Activated naive CD4-positive, alpha-beta T cell treated with anti-CD3 and anti-CD28 coated beads, Interleukin-2, amount 10 ng/mL, durations not matched to agents 7 days and 5 days (primary cell): ENCODE measurements at regions of chr1 and their contacts with region 1.

Region 1: GRCh38 chr1:28642847-28643635 is at the start of gene TAF12:
- DNase-seq: peak; percentile 94
- H3K4me3 Mint-ChIP-seq: peak within 1 kb of the TSS; percentile 98
- H3K27ac Mint-ChIP-seq: peak within 1 kb of the TSS; percentile 99
- H3K4me1 Mint-ChIP-seq: peaks cover 59% of the 10 kb centered on the region
- H3K27me3 Mint-ChIP-seq: no peaks in the 10 kb centered on the region

Region 2: GRCh38 chr1:28668191-28668955 is 25.3 kb after region 1 on chr1 and contains the start of gene GMEB1:
- CTCF ChIA-PET with region 1: interaction called, 12 read pairs
- DNase-seq: peak; percentile 90
- H3K4me3 Mint-ChIP-seq: peak within 1 kb of the TSS; percentile 96
- H3K27ac Mint-ChIP-seq: peak within 1 kb of the TSS; percentile 99
- H3K4me1 Mint-ChIP-seq: peaks cover 23% of the 10 kb centered on the region
- H3K27me3 Mint-ChIP-seq: no peaks in the 10 kb centered on the region

Region 3: DNA sequence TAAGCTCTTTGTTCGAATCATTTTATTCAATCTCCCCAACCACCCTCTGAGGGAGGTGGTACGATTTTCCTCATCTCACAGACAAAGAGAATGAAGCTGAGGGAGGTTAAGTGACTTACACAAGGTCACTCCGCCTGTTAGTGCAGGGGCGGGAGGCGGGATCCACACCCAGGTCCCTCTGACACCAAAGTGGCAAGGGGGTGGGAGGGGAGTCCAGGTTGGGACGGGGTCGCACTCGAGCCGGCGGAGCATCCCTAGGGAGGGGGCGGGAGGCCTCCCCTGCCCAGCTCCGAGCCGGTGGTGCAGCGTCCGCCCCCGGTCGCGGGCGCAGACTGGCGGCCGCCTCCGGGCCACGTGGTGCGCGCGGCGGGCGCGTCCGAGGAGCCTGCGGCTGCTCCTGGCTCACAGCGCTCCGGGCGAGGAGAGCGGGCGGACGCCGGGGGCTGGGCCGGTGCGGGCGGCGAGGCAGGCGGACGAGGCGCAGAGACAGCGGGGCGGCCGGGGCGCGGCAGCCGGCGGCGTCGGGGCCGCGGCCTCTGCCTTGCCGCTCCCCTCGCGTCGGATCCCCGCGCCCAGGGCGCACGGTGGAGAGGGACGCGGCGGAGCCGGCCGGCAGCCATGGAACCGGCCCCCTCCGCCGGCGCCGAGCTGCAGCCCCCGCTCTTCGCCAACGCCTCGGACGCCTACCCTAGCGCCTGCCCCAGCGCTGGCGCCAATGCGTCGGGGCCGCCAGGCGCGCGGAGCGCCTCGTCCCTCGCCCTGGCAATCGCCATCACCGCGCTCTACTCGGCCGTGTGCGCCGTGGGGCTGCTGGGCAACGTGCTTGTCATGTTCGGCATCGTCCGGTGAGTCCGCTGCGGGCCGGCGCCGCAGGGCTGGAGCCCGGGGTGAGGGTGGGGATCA is 169.0 kb after region 1 on chr1 and contains the start of gene OPRD1:
- CTCF ChIA-PET with region 1: no interaction called
- DNase-seq: no peak
- H3K4me3 Mint-ChIP-seq: no peak within 1 kb of the TSS
- H3K27ac Mint-ChIP-seq: no peak within 1 kb of the TSS
- H3K4me1 Mint-ChIP-seq: peaks cover 3% of the 10 kb centered on the region
- H3K27me3 Mint-ChIP-seq: peaks cover 87% of the 10 kb centered on the region